ENCODE measurements at regions of chr2 and their contacts with region 1.

Region 1: GRCh38 chr2:183859128-183859527 is 734.9 kb downstream of the NUP35 start:
- DNase-seq: no peak
- H3K4me3 ChIP-seq: no peak overlapping the region
- H3K27ac ChIP-seq: no peak overlapping the region
- H3K4me1 ChIP-seq: no peaks in the 10 kb centered on the region
- H3K27me3 ChIP-seq: no peaks in the 10 kb centered on the region
- CTCF ChIP-seq: no peak
- EP300 ChIP-seq: no peak
- POLR2A ChIP-seq: no peak

Region 2: GRCh38 chr2:183780072-183780471 is 79.1 kb before region 1 on chr2:
- intact Hi-C with region 1: no loop called
- DNase-seq: no peak
- H3K4me3 ChIP-seq: no peak overlapping the region
- H3K27ac ChIP-seq: no peak overlapping the region
- H3K4me1 ChIP-seq: no peaks in the 10 kb centered on the region
- H3K27me3 ChIP-seq: no peaks in the 10 kb centered on the region
- CTCF ChIP-seq: no peak
- EP300 ChIP-seq: no peak
- POLR2A ChIP-seq: no peak

Region 3: GRCh38 chr2:184004289-184004947 is 145.3 kb after region 1 on chr2:
- intact Hi-C with region 1: no loop called
- DNase-seq: no peak
- H3K4me3 ChIP-seq: no peak overlapping the region
- H3K27ac ChIP-seq: no peak overlapping the region
- H3K4me1 ChIP-seq: no peaks in the 10 kb centered on the region
- H3K27me3 ChIP-seq: no peaks in the 10 kb centered on the region
- CTCF ChIP-seq: no peak
- EP300 ChIP-seq: no peak
- POLR2A ChIP-seq: no peak

Region 4: GRCh38 chr2:184137955-184138354 is 278.8 kb after region 1 on chr2:
- intact Hi-C with region 1: loop called (anchors 5 kb)
- DNase-seq: no peak
- H3K4me3 ChIP-seq: no peak overlapping the region
- H3K27ac ChIP-seq: no peak overlapping the region
- H3K4me1 ChIP-seq: no peaks in the 10 kb centered on the region
- H3K27me3 ChIP-seq: no peaks in the 10 kb centered on the region
- CTCF ChIP-seq: no peak
- EP300 ChIP-seq: no peak
- POLR2A ChIP-seq: no peak

Region 5: GRCh38 chr2:184187421-184187971 is 328.4 kb after region 1 on chr2:
- intact Hi-C with region 1: no loop called
- DNase-seq: no peak
- H3K4me3 ChIP-seq: no peak overlapping the region
- H3K27ac ChIP-seq: no peak overlapping the region
- H3K4me1 ChIP-seq: no peaks in the 10 kb centered on the region
- H3K27me3 ChIP-seq: no peaks in the 10 kb centered on the region
- CTCF ChIP-seq: no peak
- EP300 ChIP-seq: no peak
- POLR2A ChIP-seq: no peak